Breast epithelium (tissue), 4 donors: ENCODE measurements at regions of chr11 and their contacts with region 1.

Region 1: GRCh38 chr11:65180877-65181568 is 705 bp upstream of the CAPN1 start:
- DNase-seq: peak in 1 of 2 donors; percentile 65
- H3K4me3 ChIP-seq: peak overlapping the region; percentile 90 to 97 (median 94)
- H3K27ac ChIP-seq: peak overlapping the region; percentile 96 to 98
- H3K4me1 ChIP-seq: peaks cover 4 to 17% of the 10 kb centered on the region in 2 donors
- H3K27me3 ChIP-seq: no peaks in the 10 kb centered on the region
- CTCF ChIP-seq: peak; percentile 15 to 53 (median 45)
- POLR2A ChIP-seq: no peak

Region 2: GRCh38 chr11:65121865-65122581 is 59.0 kb before region 1 on chr11 and contains the starts of genes FAU and MRPL49:
- intact Hi-C with region 1: loop called (anchors 10 kb)
- DNase-seq: peak; percentile 99
- H3K4me3 ChIP-seq: peak within 1 kb of the TSS; percentile 84 to 88 (median 87)
- H3K27ac ChIP-seq: peak within 1 kb of the TSS; percentile 94 to 99
- H3K4me1 ChIP-seq: peaks cover 5 to 7% of the 10 kb centered on the region in 2 donors
- H3K27me3 ChIP-seq: no peaks in the 10 kb centered on the region
- CTCF ChIP-seq: no peak
- POLR2A ChIP-seq: peak; percentile 80
- total RNA-seq, gene FAU: 786 to 1,230 (median 855) TPM
- total RNA-seq, gene MRPL49: 66.2 to 92.6 (median 72.8) TPM